ENCODE measurements at regions of chr5 and their contacts with region 1.

Region 1: DNA sequence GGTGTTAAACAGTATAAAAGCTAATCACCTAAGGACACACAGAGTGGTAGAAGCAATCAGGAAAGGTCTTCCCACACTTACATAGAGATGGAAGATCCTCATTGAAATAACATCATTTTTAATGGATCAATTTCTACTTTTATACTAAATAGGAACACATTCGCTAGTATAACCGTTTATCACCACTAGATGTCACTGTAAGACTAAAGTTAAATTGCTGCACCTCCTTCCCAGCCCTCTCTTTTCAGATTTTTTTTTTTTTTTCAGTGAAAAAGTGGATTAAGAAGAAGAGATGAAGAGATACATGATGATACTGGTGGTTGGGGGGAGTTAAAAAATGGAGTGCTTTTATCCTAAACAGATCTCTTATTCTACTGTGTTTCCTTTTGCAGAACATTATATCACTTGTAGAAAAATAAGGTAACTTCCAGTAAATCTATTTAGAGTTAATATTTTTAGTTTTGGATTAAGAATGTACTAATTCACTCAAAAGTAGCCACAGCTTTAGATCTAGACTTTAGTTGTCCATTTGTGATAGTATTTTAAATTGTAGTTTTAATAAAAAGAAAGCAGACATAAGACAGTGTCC is 116.9 kb upstream of the ARRDC3 start:
- DNase-seq: no peak
- H3K4me3 Mint-ChIP-seq: no peak overlapping the region
- H3K27ac Mint-ChIP-seq: no peak overlapping the region
- H3K4me1 Mint-ChIP-seq: no peaks in the 10 kb centered on the region
- H3K27me3 Mint-ChIP-seq: no peaks in the 10 kb centered on the region

Region 2: DNA sequence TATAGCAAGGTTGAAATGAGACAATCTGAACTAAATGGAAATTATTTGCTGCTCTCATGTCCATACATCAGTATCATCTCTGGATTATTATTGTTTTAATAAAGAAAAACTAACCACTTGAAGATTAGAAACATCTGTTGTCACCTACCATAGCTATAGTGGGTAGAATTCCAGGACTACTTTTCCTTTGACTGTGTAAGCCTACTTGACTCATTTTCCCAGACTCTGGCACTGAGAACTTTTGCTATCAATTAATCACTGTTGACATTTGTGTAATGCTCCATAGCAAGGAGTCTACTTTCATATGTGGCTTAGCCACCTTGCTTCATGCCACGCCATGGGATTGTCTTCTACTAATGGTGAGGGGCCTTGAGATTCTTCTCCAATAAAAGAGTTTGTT is 57.0 kb before region 1 on chr5:
- CTCF ChIA-PET with region 1: no interaction called
- POLR2A ChIA-PET with region 1: no interaction called
- intact Hi-C with region 1: no loop called
- DNase-seq: no peak
- H3K4me3 Mint-ChIP-seq: no peak overlapping the region
- H3K27ac Mint-ChIP-seq: no peak overlapping the region
- H3K4me1 Mint-ChIP-seq: peaks cover 2% of the 10 kb centered on the region
- H3K27me3 Mint-ChIP-seq: no peaks in the 10 kb centered on the region

Region 3: GRCh38 chr5:91535499-91535898 is 35.5 kb after region 1 on chr5:
- CTCF ChIA-PET with region 1: no interaction called
- POLR2A ChIA-PET with region 1: no interaction called
- intact Hi-C with region 1: no loop called
- DNase-seq: no peak
- H3K4me3 Mint-ChIP-seq: no peak overlapping the region
- H3K27ac Mint-ChIP-seq: no peak overlapping the region
- H3K4me1 Mint-ChIP-seq: peaks cover 3% of the 10 kb centered on the region
- H3K27me3 Mint-ChIP-seq: no peaks in the 10 kb centered on the region

Region 4: GRCh38 chr5:91641730-91642350 is 141.8 kb after region 1 on chr5:
- CTCF ChIA-PET with region 1: interaction called, 26 read pairs
- POLR2A ChIA-PET with region 1: no interaction called
- intact Hi-C with region 1: loop called (anchors 1 kb)
- DNase-seq: no peak
- H3K4me3 Mint-ChIP-seq: no peak overlapping the region
- H3K27ac Mint-ChIP-seq: no peak overlapping the region
- H3K4me1 Mint-ChIP-seq: no peaks in the 10 kb centered on the region
- H3K27me3 Mint-ChIP-seq: no peaks in the 10 kb centered on the region

Region 5: DNA sequence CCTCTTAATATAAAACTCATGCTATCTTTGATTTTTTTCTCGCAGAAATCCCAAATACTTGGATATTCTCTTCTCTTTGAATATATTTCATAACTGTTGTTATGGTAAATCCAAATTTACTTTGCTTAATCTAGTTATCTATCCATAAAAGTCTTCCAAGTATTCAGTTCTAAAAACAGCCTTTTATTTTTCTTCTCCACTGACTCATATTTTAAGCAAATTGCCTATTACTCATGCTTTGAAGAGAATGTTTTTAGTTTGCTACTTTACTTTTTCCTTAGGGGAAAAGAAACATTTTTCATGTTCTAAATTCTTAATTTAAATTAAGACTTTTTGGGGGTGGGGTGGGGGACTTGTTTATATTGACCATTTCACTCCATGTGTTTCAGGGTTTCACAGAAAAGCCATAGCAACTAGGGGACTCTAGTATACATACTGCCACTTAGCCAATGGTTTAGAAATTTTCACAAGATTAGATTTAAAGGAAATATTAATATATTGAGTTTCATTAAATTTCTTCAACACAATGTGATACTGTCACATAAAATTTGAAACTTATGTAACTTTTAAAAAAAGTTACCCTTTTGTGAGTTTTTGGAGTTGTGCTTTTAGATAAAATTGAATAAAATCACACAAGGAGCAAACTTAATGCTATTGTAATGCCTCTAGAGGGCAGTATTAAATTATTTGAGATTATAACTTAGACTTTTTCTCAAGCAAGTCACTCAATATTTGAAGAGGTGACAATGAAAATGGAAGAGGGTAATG is 428.9 kb after region 1 on chr5:
- CTCF ChIA-PET with region 1: no interaction called
- POLR2A ChIA-PET with region 1: no interaction called
- intact Hi-C with region 1: loop called (anchors 5 kb)
- DNase-seq: no peak
- H3K4me3 Mint-ChIP-seq: no peak overlapping the region
- H3K27ac Mint-ChIP-seq: no peak overlapping the region
- H3K4me1 Mint-ChIP-seq: no peaks in the 10 kb centered on the region
- H3K27me3 Mint-ChIP-seq: no peaks in the 10 kb centered on the region

Measured in activated CD4-positive, alpha-beta memory T cell treated with anti-CD3 and anti-CD28 coated beads for 36 hours (primary cell).